A549 (cell line): ENCODE measurements at regions of chr1 and their contacts with region 1.

Region 1: GRCh38 chr1:25997828-25998761 is at the start of gene PAFAH2:
- DNase-seq: peak; percentile 84 to 99
- ATAC-seq: peak; percentile 98 to 99
- H3K4me3 ChIP-seq: peak within 1 kb of the TSS; percentile 74
- H3K27ac ChIP-seq: peak within 1 kb of the TSS; percentile 88 to 94
- H3K4me1 ChIP-seq: peaks cover 11% of the 10 kb centered on the region
- CTCF ChIP-seq: peak; percentile 89
- EP300 ChIP-seq: no peak
- POLR2A ChIP-seq: peak; percentile 11; the same call in 1 of the 2 replicates
- RAD21 ChIP-seq: peak; percentile 92 to 94
- polyA plus RNA-seq, gene PAFAH2: 13.7 and 13.8 TPM in 2 replicates

Region 2: GRCh38 chr1:25890239-25891034 is 107.7 kb before region 1 on chr1:
- CTCF ChIA-PET with region 1: interaction called, 84 read pairs
- POLR2A ChIA-PET with region 1: interaction called, 11 read pairs
- DNase-seq: peak; percentile 66 to 80
- ATAC-seq: peak; percentile 68 to 72
- H3K4me3 ChIP-seq: no peak overlapping the region
- H3K27ac ChIP-seq: peak overlapping the region; percentile 94 to 98
- H3K4me1 ChIP-seq: peaks cover 46% of the 10 kb centered on the region
- CTCF ChIP-seq: no peak
- EP300 ChIP-seq: no peak
- POLR2A ChIP-seq: no peak
- RAD21 ChIP-seq: no peak

Region 3: DNA sequence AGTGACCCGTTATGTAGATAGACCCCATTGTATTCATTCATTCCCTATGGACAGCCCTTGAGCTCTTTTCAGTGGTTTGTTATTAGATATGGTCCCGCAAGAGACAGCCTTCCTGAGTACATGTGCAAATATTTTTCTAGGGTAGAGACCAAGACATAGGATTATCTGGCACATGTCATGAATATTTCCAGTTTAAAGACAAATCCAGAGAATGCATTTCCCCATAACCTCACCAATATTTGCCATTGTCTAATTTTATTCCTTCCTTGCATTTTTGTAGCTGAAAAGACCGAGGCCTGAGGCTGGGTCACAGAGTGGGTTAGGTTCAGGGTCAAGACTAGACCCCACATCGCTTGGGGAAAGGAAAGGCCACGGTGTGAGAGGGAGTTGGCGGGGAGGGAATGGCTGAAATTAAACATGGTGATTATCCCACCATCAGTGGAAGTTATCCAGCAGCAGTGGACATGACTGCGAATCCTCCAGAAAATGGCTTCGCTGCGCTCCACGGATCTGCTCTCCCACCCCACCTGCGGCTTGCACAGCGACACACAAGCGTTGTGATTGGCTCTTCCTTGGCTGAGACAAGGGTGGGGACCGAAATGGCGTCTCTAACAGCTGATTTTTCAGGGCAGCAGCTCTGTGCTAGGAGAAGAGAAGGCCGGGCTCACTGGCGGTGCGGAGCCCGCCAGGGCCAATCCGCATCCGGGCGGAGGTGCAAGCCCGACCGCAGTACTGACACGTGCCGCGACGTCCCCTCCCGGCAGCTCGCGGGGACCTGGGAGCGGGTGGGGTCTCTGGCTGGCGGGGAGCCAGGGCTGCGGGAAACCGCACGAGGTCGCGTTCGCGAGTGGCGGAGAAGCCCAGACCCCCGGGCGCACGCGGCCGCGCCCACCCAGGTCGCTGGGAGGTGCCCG is 75.8 kb before region 1 on chr1:
- CTCF ChIA-PET with region 1: interaction called, 13 read pairs
- POLR2A ChIA-PET with region 1: no interaction called
- DNase-seq: peak; percentile 10 to 53
- ATAC-seq: peak; percentile 80 to 85
- H3K4me3 ChIP-seq: peak overlapping the region; percentile 53
- H3K27ac ChIP-seq: peak overlapping the region; percentile 71 to 87
- H3K4me1 ChIP-seq: peaks cover 7% of the 10 kb centered on the region; the same call in 1 of the 3 replicates
- CTCF ChIP-seq: no peak
- EP300 ChIP-seq: no peak
- POLR2A ChIP-seq: no peak; the same call in 1 of the 2 replicates
- RAD21 ChIP-seq: no peak

Region 4: DNA sequence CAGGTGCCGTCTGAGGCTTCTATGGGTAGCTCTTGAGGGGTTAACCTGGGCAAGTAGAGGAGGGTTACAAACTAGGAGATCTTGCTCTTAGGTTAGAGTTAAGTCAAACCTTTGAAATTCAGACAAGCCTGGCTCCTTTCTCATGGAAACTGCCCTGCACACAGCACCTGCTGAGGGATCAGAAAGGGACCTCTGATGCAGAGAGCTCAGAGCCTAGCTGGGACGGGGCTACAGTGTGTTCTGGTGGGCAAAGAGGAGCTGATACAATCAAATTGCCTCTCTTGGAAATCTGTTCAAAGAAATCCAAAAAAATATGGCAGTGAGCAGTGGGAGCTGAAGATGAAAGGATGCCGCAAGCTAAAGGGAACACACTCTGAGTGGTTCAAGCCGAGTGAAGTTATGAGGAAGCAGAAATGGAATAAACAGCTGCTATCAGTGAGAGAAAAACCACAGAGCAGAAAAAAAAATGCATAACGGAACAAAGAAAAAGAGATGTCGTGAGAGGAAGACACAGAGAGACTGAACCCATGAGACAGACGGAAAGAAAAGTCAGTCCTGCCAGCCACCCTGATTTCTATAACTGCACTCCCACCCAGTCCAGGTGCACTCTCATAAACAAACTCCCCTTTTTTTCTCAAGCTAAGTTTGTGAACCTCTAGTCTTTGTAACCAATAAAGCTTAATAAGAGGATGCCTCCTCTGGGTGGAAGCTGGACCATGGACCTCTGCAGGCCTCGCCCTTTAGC is 26.9 kb before region 1 on chr1:
- CTCF ChIA-PET with region 1: interaction called, 10 read pairs
- POLR2A ChIA-PET with region 1: no interaction called
- DNase-seq: no peak
- ATAC-seq: no peak
- H3K4me3 ChIP-seq: no peak overlapping the region
- H3K27ac ChIP-seq: no peak overlapping the region
- H3K4me1 ChIP-seq: no peaks in the 10 kb centered on the region
- CTCF ChIP-seq: no peak
- EP300 ChIP-seq: no peak
- POLR2A ChIP-seq: no peak
- RAD21 ChIP-seq: no peak

Region 5: GRCh38 chr1:26066857-26067256 is 68.8 kb after region 1 on chr1:
- CTCF ChIA-PET with region 1: no interaction called
- POLR2A ChIA-PET with region 1: no interaction called
- DNase-seq: no peak
- ATAC-seq: no peak
- H3K4me3 ChIP-seq: no peak overlapping the region
- H3K27ac ChIP-seq: no peak overlapping the region
- H3K4me1 ChIP-seq: no peaks in the 10 kb centered on the region
- CTCF ChIP-seq: no peak
- EP300 ChIP-seq: no peak
- POLR2A ChIP-seq: no peak
- RAD21 ChIP-seq: no peak